Activated naive CD4-positive, alpha-beta T cell treated with anti-CD3 and anti-CD28 coated beads, Interleukin-2, amount 10 ng/mL, durations not matched to agents 7 days and 5 days (primary cell): ENCODE measurements at regions of chr2 and their contacts with region 1.

Region 1: DNA sequence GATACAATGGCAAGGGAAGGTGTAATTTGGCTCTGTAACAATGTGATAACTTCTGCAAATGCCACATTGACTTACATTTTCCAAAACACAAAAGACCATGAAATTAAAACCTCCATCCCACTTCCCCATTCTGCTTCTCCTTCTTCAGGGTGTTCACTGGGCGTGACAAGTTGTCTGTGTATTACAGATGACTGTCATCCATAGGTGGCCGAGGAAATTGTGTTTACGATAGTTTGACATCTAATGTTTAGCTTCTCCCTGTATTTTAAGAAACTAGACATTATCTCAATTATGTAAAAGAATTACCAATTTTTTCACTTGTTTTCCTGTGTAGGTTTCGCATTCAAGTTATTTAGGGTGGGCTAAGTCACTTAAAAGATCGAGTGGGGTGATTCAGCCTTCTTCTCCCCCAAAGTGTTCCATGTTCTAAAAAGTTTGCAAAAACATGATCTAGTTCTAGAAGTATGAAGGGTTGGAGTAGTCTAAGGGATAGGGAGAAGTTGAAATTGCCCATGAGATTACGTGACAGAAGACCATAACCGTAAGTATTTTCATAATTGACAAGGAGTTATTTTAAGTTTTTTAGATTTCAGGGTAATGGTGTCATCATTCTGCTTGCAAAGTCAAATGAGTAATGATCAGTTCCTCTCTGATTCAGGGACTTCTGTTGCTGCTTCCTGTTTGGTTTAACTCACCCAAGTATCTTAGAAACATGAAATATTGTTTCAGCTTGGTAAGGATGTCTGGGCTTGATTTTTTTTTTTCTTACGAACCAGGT is 25.2 kb upstream of the CYTIP start:
- DNase-seq: no peak
- H3K4me3 Mint-ChIP-seq: peak overlapping the region; percentile 70
- H3K27ac Mint-ChIP-seq: peak overlapping the region; percentile 100
- H3K4me1 Mint-ChIP-seq: peaks cover 97% of the 10 kb centered on the region
- H3K27me3 Mint-ChIP-seq: no peaks in the 10 kb centered on the region

Region 2: GRCh38 chr2:157480182-157480961 is 11.3 kb after region 1 on chr2:
- CTCF ChIA-PET with region 1: interaction called, 14 read pairs
- DNase-seq: peak; percentile 48
- H3K4me3 Mint-ChIP-seq: peak overlapping the region; percentile 69
- H3K27ac Mint-ChIP-seq: peak overlapping the region; percentile 93
- H3K4me1 Mint-ChIP-seq: peaks cover 84% of the 10 kb centered on the region
- H3K27me3 Mint-ChIP-seq: no peaks in the 10 kb centered on the region